GM10248 (cell line): ENCODE measurements at regions of chr4 and their contacts with region 1.

Region 1: GRCh38 chr4:11069083-11069482 is 359.6 kb downstream of the HS3ST1 start:
- DNase-seq: no peak
- CTCF ChIP-seq: no peak

Region 2: GRCh38 chr4:11053601-11054220 is 15.4 kb before region 1 on chr4:
- CTCF ChIA-PET with region 1: interaction called, 14 read pairs
- POLR2A ChIA-PET with region 1: no interaction called
- DNase-seq: no peak
- CTCF ChIP-seq: no peak

Region 3: GRCh38 chr4:11119474-11119873 is 50.4 kb after region 1 on chr4:
- CTCF ChIA-PET with region 1: no interaction called
- POLR2A ChIA-PET with region 1: no interaction called
- DNase-seq: no peak
- CTCF ChIP-seq: no peak